ENCODE measurements at regions of chr17 and their contacts with region 1.

Region 1: GRCh38 chr17:38351412-38352222 is at the start of gene SOCS7:
- DNase-seq: peak; percentile 82 to 98 (median 92)
- ATAC-seq: peak; percentile 84
- H3K4me3 ChIP-seq: peak within 1 kb of the TSS; percentile 83
- H3K4me3 Mint-ChIP-seq: peak within 1 kb of the TSS; percentile 99
- H3K27ac ChIP-seq: peak within 1 kb of the TSS; percentile 54 to 83
- H3K27ac Mint-ChIP-seq: peak within 1 kb of the TSS; percentile 83
- H3K4me1 ChIP-seq: peaks cover 34% of the 10 kb centered on the region
- H3K4me1 Mint-ChIP-seq: peaks cover 50% of the 10 kb centered on the region
- H3K27me3 ChIP-seq: no peaks in the 10 kb centered on the region
- H3K27me3 Mint-ChIP-seq: no peaks in the 10 kb centered on the region
- CTCF ChIP-seq: no peak
- total RNA-seq, gene SOCS7: 13.7 to 16.9 TPM

Region 2: GRCh38 chr17:37742117-37742761 is 609.4 kb before region 1 on chr17:
- CTCF ChIA-PET with region 1: no interaction called
- POLR2A ChIA-PET with region 1: no interaction called
- intact Hi-C with region 1: no loop called
- DNase-seq: peak in 1 of 14 experiments; percentile 9
- ATAC-seq: no peak
- H3K4me3 ChIP-seq: peak overlapping the region; percentile 13
- H3K4me3 Mint-ChIP-seq: no peak overlapping the region
- H3K27ac ChIP-seq: no peak overlapping the region
- H3K27ac Mint-ChIP-seq: no peak overlapping the region
- H3K4me1 ChIP-seq: peaks cover 40% of the 10 kb centered on the region
- H3K4me1 Mint-ChIP-seq: peaks cover 22% of the 10 kb centered on the region
- H3K27me3 ChIP-seq: peaks cover 75 to 91% of the 10 kb centered on the region in 2 experiments
- H3K27me3 Mint-ChIP-seq: peaks cover 91% of the 10 kb centered on the region
- CTCF ChIP-seq: no peak

Region 3: GRCh38 chr17:38415250-38416194 is 63.9 kb after region 1 on chr17:
- CTCF ChIA-PET with region 1: interaction called, 64 read pairs
- POLR2A ChIA-PET with region 1: interaction called, 14 read pairs
- intact Hi-C with region 1: loop called (anchors 1 kb)
- DNase-seq: peak in 1 of 14 experiments; percentile 25
- ATAC-seq: no peak
- H3K4me3 ChIP-seq: no peak overlapping the region
- H3K4me3 Mint-ChIP-seq: no peak overlapping the region
- H3K27ac ChIP-seq: no peak overlapping the region
- H3K27ac Mint-ChIP-seq: no peak overlapping the region
- H3K4me1 ChIP-seq: peaks cover 17% of the 10 kb centered on the region
- H3K4me1 Mint-ChIP-seq: no peaks in the 10 kb centered on the region
- H3K27me3 ChIP-seq: peaks cover 28 to 33% of the 10 kb centered on the region in 2 experiments
- H3K27me3 Mint-ChIP-seq: peaks cover 55% of the 10 kb centered on the region
- CTCF ChIP-seq: no peak

Region 4: GRCh38 chr17:38421871-38422827 is 70.5 kb after region 1 on chr17:
- CTCF ChIA-PET with region 1: interaction called, 10 read pairs
- POLR2A ChIA-PET with region 1: no interaction called
- intact Hi-C with region 1: no loop called
- DNase-seq: no peak
- ATAC-seq: no peak
- H3K4me3 ChIP-seq: no peak overlapping the region
- H3K4me3 Mint-ChIP-seq: no peak overlapping the region
- H3K27ac ChIP-seq: no peak overlapping the region
- H3K27ac Mint-ChIP-seq: no peak overlapping the region
- H3K4me1 ChIP-seq: peaks cover 8% of the 10 kb centered on the region
- H3K4me1 Mint-ChIP-seq: peaks cover 6% of the 10 kb centered on the region
- H3K27me3 ChIP-seq: peaks cover 50 to 56% of the 10 kb centered on the region in 2 experiments
- H3K27me3 Mint-ChIP-seq: peaks cover 78% of the 10 kb centered on the region
- CTCF ChIP-seq: no peak